ENCODE measurements at regions of chr2 and their contacts with region 1.

Region 1: DNA sequence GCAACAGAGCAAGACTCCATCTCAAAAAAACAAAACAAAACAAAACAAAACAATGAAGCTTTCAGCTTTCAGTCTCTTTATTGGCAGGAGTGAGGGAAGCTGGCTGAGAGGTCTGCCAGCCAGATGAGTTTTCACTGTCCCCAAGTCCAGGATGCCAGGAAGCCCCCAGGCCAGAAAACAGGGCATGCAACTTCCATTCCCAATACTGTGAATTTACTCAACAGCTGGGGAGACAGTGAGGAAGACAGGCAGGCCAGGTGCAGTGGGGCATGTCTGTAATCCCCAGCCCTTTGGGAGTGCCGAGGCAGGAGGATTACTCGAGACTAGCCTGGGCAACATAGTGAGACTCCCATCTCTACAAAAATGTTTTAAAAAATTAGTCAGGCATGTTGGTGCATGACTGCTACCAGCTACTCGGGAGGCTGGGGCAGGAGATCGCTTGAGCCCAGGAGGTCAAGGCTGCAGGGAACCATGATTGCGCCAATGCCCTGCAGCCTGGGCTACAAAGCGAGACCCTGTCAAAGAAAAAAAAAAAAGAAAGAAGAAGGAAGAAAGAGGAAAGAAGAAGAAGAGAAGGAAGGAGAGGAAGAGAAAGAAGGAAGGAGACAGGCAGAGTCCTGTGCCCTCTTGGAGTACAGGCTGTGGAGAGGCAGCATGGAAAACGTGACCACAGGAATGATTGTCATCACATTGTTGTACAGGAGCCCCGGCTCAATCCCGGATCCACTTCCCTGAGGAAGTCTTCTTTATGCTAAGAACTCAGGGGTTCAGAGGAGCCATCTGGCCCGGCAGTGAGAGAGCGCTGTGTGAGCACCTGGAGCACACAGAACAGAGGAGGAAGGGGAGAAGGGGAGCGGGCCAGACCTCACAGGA is 29.2 kb upstream of the POMC start:
- DNase-seq: no peak
- ATAC-seq: no peak
- H3K4me3 ChIP-seq: no peak overlapping the region
- H3K27ac ChIP-seq: no peak overlapping the region
- H3K4me1 ChIP-seq: no peaks in the 10 kb centered on the region
- CTCF ChIP-seq: no peak
- EP300 ChIP-seq: no peak
- POLR2A ChIP-seq: no peak
- RAD21 ChIP-seq: no peak

Region 2: GRCh38 chr2:24977631-24978030 is 219.9 kb before region 1 on chr2:
- CTCF ChIA-PET with region 1: interaction called, 58 read pairs
- POLR2A ChIA-PET with region 1: interaction called, 10 read pairs
- DNase-seq: no peak
- ATAC-seq: no peak
- H3K4me3 ChIP-seq: no peak overlapping the region
- H3K27ac ChIP-seq: no peak overlapping the region
- H3K4me1 ChIP-seq: peaks cover 7% of the 10 kb centered on the region; the same call in 2 of the 3 replicates
- CTCF ChIP-seq: no peak
- EP300 ChIP-seq: no peak
- POLR2A ChIP-seq: no peak
- RAD21 ChIP-seq: no peak

Region 3: GRCh38 chr2:25145803-25146202 is 51.8 kb before region 1 on chr2:
- CTCF ChIA-PET with region 1: interaction called, 11 read pairs
- POLR2A ChIA-PET with region 1: no interaction called
- DNase-seq: no peak
- ATAC-seq: no peak; a peak in 1 of 6 replicates
- H3K4me3 ChIP-seq: no peak overlapping the region
- H3K27ac ChIP-seq: no peak overlapping the region
- H3K4me1 ChIP-seq: no peaks in the 10 kb centered on the region
- CTCF ChIP-seq: no peak
- EP300 ChIP-seq: no peak
- POLR2A ChIP-seq: no peak
- RAD21 ChIP-seq: no peak

Region 4: DNA sequence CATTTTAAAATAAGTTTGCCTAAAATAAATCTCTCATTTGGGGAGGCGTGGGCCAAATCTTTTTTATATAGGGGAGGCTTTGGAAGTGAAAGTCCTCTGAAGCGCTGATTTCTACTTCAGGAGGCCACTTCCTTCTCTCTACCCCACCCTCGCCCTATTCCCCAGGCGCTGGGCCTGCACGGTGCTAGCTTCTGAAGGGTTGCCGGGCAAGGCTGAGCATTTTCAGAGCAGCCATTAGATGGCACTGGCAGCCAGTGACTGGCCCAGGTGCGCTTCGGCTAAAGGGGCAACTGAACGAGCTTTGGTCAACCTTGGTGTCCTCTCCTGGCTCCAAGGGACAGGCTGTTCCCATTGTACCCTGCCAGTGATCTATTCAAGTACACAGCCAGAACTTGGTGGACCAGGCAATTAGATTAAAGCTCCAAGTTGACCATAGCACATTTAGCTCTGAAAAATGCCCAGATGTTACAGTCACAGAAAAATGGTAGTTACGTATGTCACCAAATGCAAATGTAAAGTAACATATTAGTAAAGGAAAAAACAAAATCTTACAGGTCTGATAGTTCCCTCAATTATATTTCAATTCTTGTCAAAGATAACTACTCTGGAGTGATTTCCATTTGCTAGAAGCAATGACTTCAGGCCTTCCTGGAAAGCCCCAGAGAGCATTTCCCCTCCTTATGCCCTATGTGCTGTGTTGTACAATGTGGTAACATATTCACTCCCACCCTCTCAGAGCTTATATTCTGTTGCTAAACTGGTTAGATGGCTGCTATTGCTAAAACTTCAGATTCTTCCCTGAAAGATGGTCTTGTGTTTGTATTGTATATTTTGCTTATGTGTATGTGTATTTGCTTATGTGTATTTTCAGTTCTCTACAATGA is 31.3 kb before region 1 on chr2:
- CTCF ChIA-PET with region 1: interaction called, 87 read pairs
- POLR2A ChIA-PET with region 1: no interaction called
- DNase-seq: peak; percentile 26 to 61
- ATAC-seq: peak; percentile 66 to 86
- H3K4me3 ChIP-seq: no peak overlapping the region
- H3K27ac ChIP-seq: no peak overlapping the region
- H3K4me1 ChIP-seq: no peaks in the 10 kb centered on the region
- CTCF ChIP-seq: peak; percentile 71
- EP300 ChIP-seq: no peak
- POLR2A ChIP-seq: no peak
- RAD21 ChIP-seq: peak; percentile 76 to 81

Region 5: DNA sequence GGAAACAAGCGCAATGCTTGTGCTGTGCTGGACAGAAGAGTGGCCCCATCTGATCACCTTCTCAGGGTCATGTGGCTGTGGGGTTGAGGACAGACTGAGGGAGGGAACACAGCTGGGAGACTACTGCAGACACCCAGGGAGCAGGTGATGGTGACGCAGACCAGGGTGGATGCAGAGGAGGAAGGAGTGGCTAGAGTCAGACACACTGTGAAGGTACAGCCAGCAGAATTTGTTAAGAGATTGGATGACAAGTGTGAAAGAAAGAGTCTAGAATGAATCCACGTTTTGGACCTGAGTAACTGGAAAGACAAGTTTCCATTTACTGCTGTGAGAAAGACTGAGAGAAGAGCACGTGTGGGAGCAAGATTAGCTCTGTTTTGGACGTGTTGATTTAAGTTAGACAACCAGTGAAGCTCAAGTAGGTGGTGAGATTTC is 13.3 kb before region 1 on chr2:
- CTCF ChIA-PET with region 1: interaction called, 21 read pairs
- POLR2A ChIA-PET with region 1: no interaction called
- DNase-seq: no peak
- ATAC-seq: peak; percentile 30 to 43; a peak in 3 of 6 replicates
- H3K4me3 ChIP-seq: no peak overlapping the region
- H3K27ac ChIP-seq: no peak overlapping the region
- H3K4me1 ChIP-seq: no peaks in the 10 kb centered on the region
- CTCF ChIP-seq: no peak
- EP300 ChIP-seq: no peak
- POLR2A ChIP-seq: no peak
- RAD21 ChIP-seq: no peak

Region 6: GRCh38 chr2:25228848-25229278 is 31.3 kb after region 1 on chr2:
- CTCF ChIA-PET with region 1: interaction called, 24 read pairs
- POLR2A ChIA-PET with region 1: no interaction called
- DNase-seq: peak; percentile 84 to 97
- ATAC-seq: peak; percentile 94 to 98
- H3K4me3 ChIP-seq: no peak overlapping the region
- H3K27ac ChIP-seq: peak overlapping the region in 1 of 2 experiments; percentile 11; a peak in 1 of 6 replicates
- H3K4me1 ChIP-seq: peaks cover 9% of the 10 kb centered on the region
- CTCF ChIP-seq: peak; percentile 66
- EP300 ChIP-seq: no peak
- POLR2A ChIP-seq: no peak
- RAD21 ChIP-seq: peak; percentile 36 to 57; a peak in 3 of 5 replicates

Measured in A549 (cell line).